ENCODE measurements at regions of chr14 and their contacts with region 1.

Region 1: DNA sequence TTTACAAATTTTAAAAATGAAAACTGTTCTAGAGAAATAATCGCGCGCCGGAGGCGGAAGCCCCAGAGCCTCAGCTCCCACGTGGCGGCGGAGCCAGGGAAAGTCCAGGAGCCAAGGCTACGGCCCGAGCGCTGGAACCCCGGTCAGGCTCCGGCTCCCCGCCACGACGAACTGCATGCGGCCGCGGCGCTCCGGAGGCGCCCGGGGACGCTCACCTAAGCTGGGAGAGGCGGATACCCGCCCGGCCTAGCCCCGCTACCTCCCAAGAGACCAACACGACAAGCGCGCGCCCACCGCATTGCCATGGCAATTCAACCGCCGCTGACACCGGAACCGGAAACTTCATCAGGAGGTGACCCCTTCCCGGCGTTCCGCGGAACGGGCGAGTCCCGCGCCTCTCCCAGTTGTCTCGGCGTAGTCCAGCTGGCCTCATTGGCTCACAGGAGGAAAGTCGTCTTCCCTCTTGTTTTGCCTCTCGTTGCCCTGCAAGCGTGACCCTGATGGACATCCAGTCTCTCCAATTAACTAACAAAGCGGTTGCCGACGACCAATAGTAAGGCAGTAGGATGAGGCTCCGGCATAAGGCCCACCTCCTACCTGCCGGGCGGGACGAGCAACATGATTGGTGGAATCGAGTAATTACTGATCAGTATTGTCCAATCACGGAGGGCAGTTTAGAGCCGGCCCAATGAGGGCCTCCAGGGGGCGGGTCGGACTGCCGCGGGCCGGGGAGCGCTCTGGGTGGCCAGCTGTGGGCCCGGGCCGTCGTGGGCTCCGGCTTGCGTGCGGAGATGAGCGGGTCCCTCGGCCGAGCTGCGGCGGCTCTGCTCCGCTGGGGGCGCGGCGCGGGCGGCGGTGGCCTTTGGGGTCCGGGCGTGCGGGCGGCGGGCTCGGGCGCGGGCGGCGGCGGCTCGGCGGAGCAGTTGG is at the start of gene GLRX5:
- DNase-seq: peak; percentile 99
- H3K4me3 Mint-ChIP-seq: peak within 1 kb of the TSS; percentile 92
- H3K27ac Mint-ChIP-seq: peak within 1 kb of the TSS; percentile 85
- H3K4me1 Mint-ChIP-seq: peaks cover 64% of the 10 kb centered on the region
- H3K27me3 Mint-ChIP-seq: no peaks in the 10 kb centered on the region
- total RNA-seq, gene GLRX5: 30.4 to 34.5 TPM

Region 2: DNA sequence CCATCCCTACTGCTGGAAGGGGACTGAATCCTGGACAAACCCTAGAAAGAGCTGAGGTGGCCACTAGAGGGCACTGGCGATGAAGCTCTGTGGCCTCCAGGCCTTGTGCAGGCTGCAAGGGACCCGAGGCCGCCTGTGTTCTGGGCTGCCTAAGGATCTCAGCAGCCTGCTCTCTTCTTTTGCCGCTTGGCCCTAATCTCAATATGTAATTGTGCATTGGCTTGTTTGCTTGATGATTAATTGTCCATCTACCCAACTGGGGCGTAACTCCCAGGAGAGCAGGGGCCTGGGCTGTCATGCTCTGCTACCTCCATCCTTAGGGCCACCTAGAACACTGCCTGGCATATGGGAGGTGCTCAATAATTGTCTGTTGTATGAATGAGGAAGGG is 91.9 kb before region 1 on chr14:
- CTCF ChIA-PET with region 1: interaction called, 12 read pairs
- POLR2A ChIA-PET with region 1: interaction called, 5 read pairs
- DNase-seq: peak; percentile 75
- H3K4me3 Mint-ChIP-seq: no peak overlapping the region
- H3K27ac Mint-ChIP-seq: no peak overlapping the region
- H3K4me1 Mint-ChIP-seq: peaks cover 3% of the 10 kb centered on the region
- H3K27me3 Mint-ChIP-seq: no peaks in the 10 kb centered on the region

Region 3: GRCh38 chr14:95463171-95463901 is 71.2 kb before region 1 on chr14:
- CTCF ChIA-PET with region 1: no interaction called
- POLR2A ChIA-PET with region 1: interaction called, 11 read pairs
- DNase-seq: peak; percentile 34
- H3K4me3 Mint-ChIP-seq: no peak overlapping the region
- H3K27ac Mint-ChIP-seq: peak overlapping the region; percentile 86
- H3K4me1 Mint-ChIP-seq: peaks cover 35% of the 10 kb centered on the region
- H3K27me3 Mint-ChIP-seq: no peaks in the 10 kb centered on the region

Region 4: GRCh38 chr14:95495538-95496025 is 39.0 kb before region 1 on chr14:
- CTCF ChIA-PET with region 1: interaction called, 4 read pairs
- POLR2A ChIA-PET with region 1: interaction called, 17 read pairs
- DNase-seq: peak; percentile 41
- H3K4me3 Mint-ChIP-seq: peak overlapping the region; percentile 36
- H3K27ac Mint-ChIP-seq: peak overlapping the region; percentile 88
- H3K4me1 Mint-ChIP-seq: peaks cover 77% of the 10 kb centered on the region
- H3K27me3 Mint-ChIP-seq: no peaks in the 10 kb centered on the region

Region 5: GRCh38 chr14:95515596-95516552 is 18.7 kb before region 1 on chr14:
- CTCF ChIA-PET with region 1: interaction called, 118 read pairs
- POLR2A ChIA-PET with region 1: interaction called, 199 read pairs
- DNase-seq: peak; percentile 86
- H3K4me3 Mint-ChIP-seq: peak overlapping the region; percentile 92
- H3K27ac Mint-ChIP-seq: peak overlapping the region; percentile 87
- H3K4me1 Mint-ChIP-seq: peaks cover 77% of the 10 kb centered on the region
- H3K27me3 Mint-ChIP-seq: no peaks in the 10 kb centered on the region

Region 6: GRCh38 chr14:95569440-95569839 is 34.9 kb after region 1 on chr14:
- CTCF ChIA-PET with region 1: no interaction called
- POLR2A ChIA-PET with region 1: no interaction called
- DNase-seq: no peak
- H3K4me3 Mint-ChIP-seq: no peak overlapping the region
- H3K27ac Mint-ChIP-seq: no peak overlapping the region
- H3K4me1 Mint-ChIP-seq: no peaks in the 10 kb centered on the region
- H3K27me3 Mint-ChIP-seq: peaks cover 4% of the 10 kb centered on the region

Region 7: DNA sequence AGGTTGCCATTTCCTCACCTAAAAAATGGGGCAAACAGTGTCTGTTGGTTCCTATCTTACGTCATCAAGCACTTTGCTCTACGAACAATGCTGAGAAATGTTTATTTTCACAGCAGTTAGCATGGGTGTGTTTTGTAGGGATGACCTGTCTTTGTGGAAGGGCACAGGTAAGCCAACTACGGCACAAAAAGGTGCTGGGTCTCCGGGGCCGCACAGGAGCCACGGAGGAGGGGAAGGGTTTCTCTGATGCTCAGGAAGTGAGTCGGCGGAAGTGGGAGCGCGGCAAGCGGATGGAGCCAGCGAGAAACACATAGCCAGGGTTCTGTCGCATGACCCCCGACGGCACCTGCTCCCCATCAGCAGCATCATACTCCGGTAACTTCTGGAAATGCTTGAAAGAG is 86.1 kb after region 1 on chr14:
- CTCF ChIA-PET with region 1: no interaction called
- POLR2A ChIA-PET with region 1: no interaction called
- DNase-seq: no peak
- H3K4me3 Mint-ChIP-seq: peak overlapping the region; percentile 46
- H3K27ac Mint-ChIP-seq: peak overlapping the region; percentile 1
- H3K4me1 Mint-ChIP-seq: no peaks in the 10 kb centered on the region
- H3K27me3 Mint-ChIP-seq: peaks cover 5% of the 10 kb centered on the region